SK-N-SH (cell line): ENCODE measurements at regions of chr10 and their contacts with region 1.

Region 1: GRCh38 chr10:78047314-78047891 is 13.7 kb downstream of the RPS24 start:
- DNase-seq: peak; percentile 80
- H3K4me3 ChIP-seq: no peak overlapping the region; a peak in 1 of 4 replicates
- H3K27ac ChIP-seq: peak overlapping the region in 1 of 2 experiments; percentile 70; a peak in 2 of 4 replicates
- H3K4me1 ChIP-seq: peaks cover 22 to 26% of the 10 kb centered on the region in 2 experiments; a peak in 3 of 4 replicates
- H3K27me3 ChIP-seq: no peaks in the 10 kb centered on the region
- CTCF ChIP-seq: peak; percentile 94
- EP300 ChIP-seq: peak in 1 of 2 experiments; percentile 57; a peak in 1 of 4 replicates
- RAD21 ChIP-seq: peak; percentile 100

Region 2: GRCh38 chr10:77756319-77757232 is 290.8 kb before region 1 on chr10:
- CTCF ChIA-PET with region 1: no interaction called
- POLR2A ChIA-PET with region 1: no interaction called
- DNase-seq: peak; percentile 65
- H3K4me3 ChIP-seq: no peak overlapping the region; a peak in 1 of 4 replicates
- H3K27ac ChIP-seq: no peak overlapping the region
- H3K4me1 ChIP-seq: peaks cover 0 to 3% of the 10 kb centered on the region in 2 experiments; a peak in 1 of 4 replicates
- H3K27me3 ChIP-seq: no peaks in the 10 kb centered on the region
- CTCF ChIP-seq: peak; percentile 89
- EP300 ChIP-seq: no peak
- RAD21 ChIP-seq: peak; percentile 89

Region 3: GRCh38 chr10:78015546-78015945 is 31.9 kb before region 1 on chr10:
- CTCF ChIA-PET with region 1: no interaction called
- POLR2A ChIA-PET with region 1: no interaction called
- DNase-seq: no peak
- H3K4me3 ChIP-seq: no peak overlapping the region
- H3K27ac ChIP-seq: no peak overlapping the region
- H3K4me1 ChIP-seq: no peaks in the 10 kb centered on the region
- H3K27me3 ChIP-seq: no peaks in the 10 kb centered on the region
- CTCF ChIP-seq: no peak
- EP300 ChIP-seq: no peak
- RAD21 ChIP-seq: no peak

Region 4: GRCh38 chr10:78066012-78066411 is 18.6 kb after region 1 on chr10:
- CTCF ChIA-PET with region 1: interaction called, 15 read pairs
- POLR2A ChIA-PET with region 1: no interaction called
- DNase-seq: no peak
- H3K4me3 ChIP-seq: no peak overlapping the region
- H3K27ac ChIP-seq: no peak overlapping the region
- H3K4me1 ChIP-seq: peaks cover 0 to 5% of the 10 kb centered on the region in 2 experiments; a peak in 1 of 4 replicates
- H3K27me3 ChIP-seq: no peaks in the 10 kb centered on the region
- CTCF ChIP-seq: no peak
- EP300 ChIP-seq: no peak
- RAD21 ChIP-seq: no peak

Region 5: GRCh38 chr10:78155722-78156121 is 108.3 kb after region 1 on chr10:
- CTCF ChIA-PET with region 1: interaction called, 15 read pairs
- POLR2A ChIA-PET with region 1: no interaction called
- DNase-seq: no peak
- H3K4me3 ChIP-seq: no peak overlapping the region
- H3K27ac ChIP-seq: no peak overlapping the region
- H3K4me1 ChIP-seq: no peaks in the 10 kb centered on the region
- H3K27me3 ChIP-seq: no peaks in the 10 kb centered on the region; the same call in 1 of the 2 replicates
- CTCF ChIP-seq: no peak; the same call in 1 of the 2 replicates
- EP300 ChIP-seq: no peak
- RAD21 ChIP-seq: no peak

Region 6: DNA sequence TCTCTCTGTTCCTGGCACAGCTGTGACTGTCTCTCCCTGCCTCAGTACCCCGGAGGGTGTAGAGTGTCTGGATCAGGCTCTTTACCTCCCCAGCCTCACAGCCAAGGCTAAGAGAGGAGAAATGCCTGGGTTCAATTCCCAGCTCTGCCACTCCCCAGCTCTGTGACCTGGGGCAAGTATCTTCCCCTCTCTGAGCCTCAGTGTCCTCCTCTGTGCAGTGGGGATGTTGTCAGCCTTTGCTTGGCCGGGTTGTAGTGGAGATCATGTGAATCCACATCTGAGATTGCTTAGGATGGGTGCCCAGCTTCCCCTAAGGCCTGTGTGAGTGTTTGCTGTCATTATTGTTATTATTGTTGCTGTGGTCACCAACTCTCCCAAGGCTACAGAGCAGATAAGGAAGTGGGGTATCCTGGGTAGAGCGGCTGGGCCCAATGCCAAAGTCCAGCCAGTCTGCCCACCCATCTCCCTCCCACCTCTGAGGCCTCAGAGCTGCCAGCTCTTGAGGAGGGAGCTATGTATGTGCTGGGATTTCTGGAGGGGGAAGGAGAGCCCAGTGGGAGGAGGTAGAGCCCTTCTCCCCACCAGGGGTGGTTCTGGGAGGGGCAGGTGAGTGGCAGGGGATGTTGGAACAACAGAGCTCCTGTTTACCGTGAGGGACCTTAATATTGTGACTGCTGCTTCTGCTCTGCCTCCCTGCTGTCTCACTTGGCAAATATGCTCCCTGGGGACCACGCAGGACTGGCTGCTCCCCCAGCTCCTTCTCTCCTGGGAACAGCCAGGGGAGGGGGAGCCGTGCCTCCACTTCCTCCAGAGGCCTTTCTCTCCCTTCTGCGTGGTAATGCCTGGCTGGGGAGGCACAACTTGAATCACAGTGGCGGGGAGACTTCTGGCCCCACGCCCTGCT is 156.8 kb after region 1 on chr10:
- CTCF ChIA-PET with region 1: interaction called, 45 read pairs
- POLR2A ChIA-PET with region 1: no interaction called
- DNase-seq: peak; percentile 87
- H3K4me3 ChIP-seq: no peak overlapping the region
- H3K27ac ChIP-seq: peak overlapping the region in 1 of 2 experiments; percentile 67; a peak in 2 of 4 replicates
- H3K4me1 ChIP-seq: peaks cover 17 to 57% of the 10 kb centered on the region in 2 experiments
- H3K27me3 ChIP-seq: no peaks in the 10 kb centered on the region
- CTCF ChIP-seq: no peak
- EP300 ChIP-seq: peak in 1 of 2 experiments; percentile 86; a peak in 2 of 4 replicates
- RAD21 ChIP-seq: peak; percentile 6

Region 7: DNA sequence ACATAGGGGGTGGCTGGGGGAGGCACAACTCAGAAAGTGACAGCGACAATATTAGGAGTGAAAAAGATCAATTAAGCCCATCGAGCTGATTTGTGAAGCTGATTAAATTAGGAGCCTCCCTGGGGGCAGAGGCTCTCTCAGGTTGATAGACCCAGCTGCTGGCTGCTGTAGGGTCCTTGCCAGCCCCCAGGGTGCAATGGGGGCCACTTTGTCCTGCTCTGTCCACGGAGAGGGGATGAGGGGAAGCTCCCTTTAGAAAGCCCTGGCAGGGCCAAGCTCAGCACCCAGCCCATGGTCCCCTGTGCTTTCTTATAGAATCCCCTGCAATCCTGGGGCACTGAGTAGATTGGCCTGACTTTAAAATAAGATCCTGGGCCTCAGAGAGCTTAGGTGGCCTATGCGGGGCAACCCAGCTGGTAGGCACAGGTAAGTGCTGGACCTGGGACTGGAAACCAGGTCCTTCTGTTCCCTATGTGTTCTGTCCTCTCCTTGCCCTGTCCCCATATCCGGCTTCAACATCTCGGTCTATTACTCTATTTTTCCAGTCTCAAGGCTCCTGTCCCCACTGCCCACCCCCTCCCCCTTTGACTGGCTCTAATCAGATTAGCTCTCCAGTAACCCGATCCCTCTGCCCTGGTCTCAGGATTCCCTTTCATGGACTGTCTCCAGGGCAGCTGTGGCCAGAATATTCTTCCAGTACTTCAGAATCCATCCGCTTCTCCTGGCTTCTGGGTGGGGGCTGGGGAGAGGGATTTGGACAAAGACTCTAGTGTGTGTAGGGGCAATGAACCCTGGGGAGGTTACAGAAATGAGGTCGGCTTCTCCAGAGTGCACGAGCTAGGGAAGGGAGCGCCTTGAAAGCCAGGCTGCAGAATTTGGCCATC is 245.8 kb after region 1 on chr10:
- CTCF ChIA-PET with region 1: interaction called, 30 read pairs
- POLR2A ChIA-PET with region 1: interaction called, 3 read pairs
- DNase-seq: peak; percentile 69
- H3K4me3 ChIP-seq: no peak overlapping the region
- H3K27ac ChIP-seq: peak overlapping the region; percentile 17 to 99; a peak in 3 of 4 replicates
- H3K4me1 ChIP-seq: peaks cover 28 to 80% of the 10 kb centered on the region in 2 experiments
- H3K27me3 ChIP-seq: no peaks in the 10 kb centered on the region
- CTCF ChIP-seq: no peak
- EP300 ChIP-seq: peak; percentile 52 to 69; a peak in 3 of 4 replicates
- RAD21 ChIP-seq: peak; percentile 29

Region 8: GRCh38 chr10:78657163-78657861 is 609.9 kb after region 1 on chr10:
- CTCF ChIA-PET with region 1: interaction called, 10 read pairs
- POLR2A ChIA-PET with region 1: no interaction called
- DNase-seq: peak; percentile 60
- H3K4me3 ChIP-seq: no peak overlapping the region
- H3K27ac ChIP-seq: peak overlapping the region; percentile 12 to 99; a peak in 3 of 4 replicates
- H3K4me1 ChIP-seq: peaks cover 0 to 37% of the 10 kb centered on the region in 2 experiments; a peak in 2 of 4 replicates
- H3K27me3 ChIP-seq: no peaks in the 10 kb centered on the region
- CTCF ChIP-seq: peak; percentile 62
- EP300 ChIP-seq: no peak
- RAD21 ChIP-seq: peak; percentile 72